ENCODE measurements at regions of chr6 and their contacts with region 1.

Region 1: DNA sequence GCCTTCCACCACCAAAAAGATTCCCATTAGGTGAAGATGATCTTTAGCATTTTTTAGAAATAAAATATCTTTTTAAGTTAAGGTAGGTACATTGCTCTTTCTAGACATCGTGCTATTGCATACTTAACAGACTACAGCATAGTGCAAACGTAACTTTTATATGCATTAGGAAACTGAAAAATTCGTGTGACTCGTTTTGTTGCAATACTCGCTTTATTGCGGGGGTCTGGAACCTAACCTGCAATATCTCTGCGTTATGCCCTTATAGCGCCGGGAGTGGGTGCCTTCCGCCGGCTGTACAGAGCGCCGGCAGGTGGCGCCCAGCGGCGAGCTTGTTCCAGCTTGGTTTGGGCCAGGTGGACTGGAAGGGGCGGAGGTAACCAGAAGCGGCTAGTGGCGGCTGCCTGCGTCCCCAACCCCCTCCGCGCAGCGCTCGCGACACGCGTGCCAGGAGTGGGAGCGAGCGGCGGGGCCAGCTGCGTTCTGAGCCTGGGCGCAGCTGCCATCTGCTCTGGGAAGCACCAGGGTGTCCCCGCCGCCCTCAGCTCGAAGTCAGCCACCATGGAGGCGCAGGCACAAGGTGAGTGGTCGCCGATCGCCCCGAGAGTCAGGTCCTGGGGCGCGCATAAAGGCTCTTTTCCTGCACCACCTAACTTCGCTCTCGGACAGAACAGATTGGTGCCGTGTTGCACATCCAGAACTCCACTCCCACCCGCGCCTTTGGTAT is at the start of gene TPD52L1:
- DNase-seq: peak; percentile 74 to 84 (median 81)
- H3K4me3 ChIP-seq: peak within 1 kb of the TSS; percentile 52
- H3K27ac ChIP-seq: peak within 1 kb of the TSS; percentile 16 to 40
- H3K4me1 ChIP-seq: peaks cover 3% of the 10 kb centered on the region
- H3K27me3 ChIP-seq: no peaks in the 10 kb centered on the region
- CTCF ChIP-seq: peak; percentile 55 to 78 (median 75)
- EP300 ChIP-seq: no peak
- POLR2A ChIP-seq: no peak
- total RNA-seq, gene TPD52L1: 14.4 to 154 (median 31.6) TPM

Region 2: GRCh38 chr6:125220712-125221111 is 67.2 kb after region 1 on chr6:
- intact Hi-C with region 1: no loop called
- DNase-seq: peak in 4 of 5 donors; percentile 37 to 50 (median 44)
- H3K4me3 ChIP-seq: no peak overlapping the region
- H3K27ac ChIP-seq: peak overlapping the region; percentile 14 to 25
- H3K4me1 ChIP-seq: peaks cover 8% of the 10 kb centered on the region
- H3K27me3 ChIP-seq: no peaks in the 10 kb centered on the region
- CTCF ChIP-seq: no peak
- EP300 ChIP-seq: no peak
- POLR2A ChIP-seq: no peak

Region 3: DNA sequence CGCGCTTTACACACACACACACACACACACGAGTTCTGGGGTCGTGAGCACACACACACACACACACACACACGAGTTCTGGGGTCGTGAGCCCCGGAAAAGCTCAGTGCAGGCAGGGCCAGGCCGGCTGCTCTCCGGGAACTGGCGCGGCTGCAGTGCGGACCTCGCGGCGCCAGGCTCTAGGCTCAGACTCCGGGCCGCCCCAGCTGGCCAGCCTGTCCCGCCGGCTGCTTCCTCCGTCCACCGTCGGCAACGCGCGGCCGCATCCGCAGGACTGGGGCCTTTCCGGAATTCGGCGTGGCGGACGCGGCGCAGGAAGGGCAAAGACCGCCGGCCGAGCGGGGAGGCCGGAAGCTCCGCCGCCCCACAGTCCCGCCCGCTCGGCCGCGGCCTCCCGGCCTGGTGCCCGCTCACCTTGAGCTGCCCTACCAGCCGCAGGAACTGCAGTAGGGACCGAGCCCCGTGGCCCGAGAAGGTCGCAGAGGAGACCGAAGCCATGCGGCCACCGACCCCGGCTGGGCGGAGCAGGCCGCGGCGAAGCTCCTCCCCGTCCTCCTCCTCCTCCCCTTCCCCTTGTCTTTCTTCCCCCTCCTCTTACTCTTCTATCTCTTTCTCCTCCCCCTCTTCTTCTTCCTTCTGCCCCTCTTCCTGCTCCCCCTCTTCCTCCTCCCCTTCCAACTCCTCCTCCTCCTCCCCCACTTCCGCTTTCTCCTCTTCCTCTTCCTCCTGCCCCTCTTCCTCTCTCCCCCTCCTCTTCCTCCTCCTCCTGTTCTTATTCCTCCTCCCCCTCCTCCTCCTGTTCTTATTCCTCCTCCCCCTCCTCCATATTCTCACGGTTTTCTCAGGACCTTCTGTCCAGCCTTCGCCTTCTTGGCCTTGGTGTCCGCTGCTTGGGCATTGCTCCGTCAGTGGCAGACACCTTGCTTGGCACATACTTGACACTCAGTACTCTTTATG is 148.2 kb after region 1 on chr6 and contains the start of gene HDDC2:
- intact Hi-C with region 1: loop called (anchors 5 to 10 kb)
- DNase-seq: peak; percentile 63 to 81 (median 72)
- H3K4me3 ChIP-seq: peak within 1 kb of the TSS; percentile 75
- H3K27ac ChIP-seq: peak within 1 kb of the TSS; percentile 31 to 70
- H3K4me1 ChIP-seq: peaks cover 11% of the 10 kb centered on the region
- H3K27me3 ChIP-seq: no peaks in the 10 kb centered on the region
- CTCF ChIP-seq: no peak
- EP300 ChIP-seq: no peak
- POLR2A ChIP-seq: peak; percentile 22
- total RNA-seq, gene HDDC2: 31.4 to 75.5 (median 54.4) TPM

Region 4: DNA sequence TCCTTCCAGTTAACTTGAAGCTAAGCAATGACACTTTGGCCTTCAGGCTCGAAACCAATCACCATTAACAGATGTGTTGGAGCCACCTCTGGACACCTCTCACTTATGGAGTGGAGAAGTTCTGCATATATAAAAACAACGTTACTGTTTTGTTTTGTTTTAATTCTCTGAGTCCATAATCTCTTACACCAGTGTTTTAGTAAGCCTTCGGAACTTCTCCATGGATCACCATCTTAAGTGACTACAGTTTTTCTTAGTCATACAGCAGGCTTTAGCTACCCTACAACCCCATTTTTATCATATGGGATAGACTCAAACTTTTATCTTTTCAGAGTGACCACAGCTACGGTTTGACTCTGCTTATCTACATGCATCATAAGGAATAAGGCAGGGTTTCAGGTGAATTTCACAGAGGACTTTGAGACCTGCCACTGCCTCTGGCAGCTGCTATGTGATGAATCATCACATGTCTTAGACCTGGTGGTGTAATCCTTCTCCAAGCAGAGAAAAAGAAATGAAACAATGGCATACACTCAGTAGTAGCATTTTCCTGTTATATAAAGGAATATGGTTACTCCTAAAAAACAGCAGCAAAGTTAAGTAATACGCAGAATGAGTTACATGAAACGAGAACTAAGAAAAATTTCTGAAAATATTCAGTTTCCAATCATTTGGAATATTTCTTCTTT is 153.7 kb after region 1 on chr6:
- intact Hi-C with region 1: loop called (anchors 5 to 10 kb)
- DNase-seq: no peak
- H3K4me3 ChIP-seq: no peak overlapping the region
- H3K27ac ChIP-seq: no peak overlapping the region
- H3K4me1 ChIP-seq: no peaks in the 10 kb centered on the region
- H3K27me3 ChIP-seq: no peaks in the 10 kb centered on the region
- CTCF ChIP-seq: no peak
- EP300 ChIP-seq: no peak
- POLR2A ChIP-seq: no peak

Region 5: GRCh38 chr6:125363039-125363823 is 209.7 kb after region 1 on chr6:
- intact Hi-C with region 1: no loop called
- DNase-seq: peak in 4 of 5 donors; percentile 23 to 65 (median 43)
- H3K4me3 ChIP-seq: peak overlapping the region; percentile 40
- H3K27ac ChIP-seq: no peak overlapping the region
- H3K4me1 ChIP-seq: peaks cover 2% of the 10 kb centered on the region
- H3K27me3 ChIP-seq: no peaks in the 10 kb centered on the region
- CTCF ChIP-seq: no peak
- EP300 ChIP-seq: no peak
- POLR2A ChIP-seq: no peak

Region 6: GRCh38 chr6:125749173-125749864 is 595.8 kb after region 1 on chr6 and contains the start of gene HEY2:
- intact Hi-C with region 1: loop called in 1 of 4 experiments (anchors 10 kb)
- DNase-seq: peak; percentile 93 to 97 (median 96)
- H3K4me3 ChIP-seq: peak within 1 kb of the TSS; percentile 77
- H3K27ac ChIP-seq: peak within 1 kb of the TSS; percentile 85 to 93
- H3K4me1 ChIP-seq: peaks cover 4% of the 10 kb centered on the region
- H3K27me3 ChIP-seq: no peaks in the 10 kb centered on the region
- CTCF ChIP-seq: peak in 2 of 3 donors; percentile 33 to 55
- EP300 ChIP-seq: peak; percentile 7
- POLR2A ChIP-seq: peak; percentile 75
- total RNA-seq, gene HEY2: 3.0 to 19.9 (median 5.5) TPM